Activated CD4-positive, alpha-beta T cell treated with anti-CD3 and anti-CD28 coated beads, Interleukin-2, amount 10 ng/mL, durations not matched to agents 24 days and 14 days (primary cell): ENCODE measurements at regions of chr11 and their contacts with region 1.

Region 1: GRCh38 chr11:11028017-11028692 is 170.3 kb upstream of the ZBED5 start:
- DNase-seq: peak; percentile 92
- H3K4me3 Mint-ChIP-seq: no peak overlapping the region
- H3K27ac Mint-ChIP-seq: no peak overlapping the region
- H3K4me1 Mint-ChIP-seq: peaks cover 2% of the 10 kb centered on the region
- H3K27me3 Mint-ChIP-seq: peaks cover 22% of the 10 kb centered on the region

Region 2: GRCh38 chr11:10893714-10894151 is 134.4 kb before region 1 on chr11:
- intact Hi-C with region 1: no loop called
- DNase-seq: no peak
- H3K4me3 Mint-ChIP-seq: no peak overlapping the region
- H3K27ac Mint-ChIP-seq: no peak overlapping the region
- H3K4me1 Mint-ChIP-seq: no peaks in the 10 kb centered on the region
- H3K27me3 Mint-ChIP-seq: peaks cover 20% of the 10 kb centered on the region

Region 3: GRCh38 chr11:10920205-10920604 is 108.0 kb before region 1 on chr11:
- intact Hi-C with region 1: no loop called
- DNase-seq: no peak
- H3K4me3 Mint-ChIP-seq: no peak overlapping the region
- H3K27ac Mint-ChIP-seq: no peak overlapping the region
- H3K4me1 Mint-ChIP-seq: no peaks in the 10 kb centered on the region
- H3K27me3 Mint-ChIP-seq: peaks cover 8% of the 10 kb centered on the region

Region 4: DNA sequence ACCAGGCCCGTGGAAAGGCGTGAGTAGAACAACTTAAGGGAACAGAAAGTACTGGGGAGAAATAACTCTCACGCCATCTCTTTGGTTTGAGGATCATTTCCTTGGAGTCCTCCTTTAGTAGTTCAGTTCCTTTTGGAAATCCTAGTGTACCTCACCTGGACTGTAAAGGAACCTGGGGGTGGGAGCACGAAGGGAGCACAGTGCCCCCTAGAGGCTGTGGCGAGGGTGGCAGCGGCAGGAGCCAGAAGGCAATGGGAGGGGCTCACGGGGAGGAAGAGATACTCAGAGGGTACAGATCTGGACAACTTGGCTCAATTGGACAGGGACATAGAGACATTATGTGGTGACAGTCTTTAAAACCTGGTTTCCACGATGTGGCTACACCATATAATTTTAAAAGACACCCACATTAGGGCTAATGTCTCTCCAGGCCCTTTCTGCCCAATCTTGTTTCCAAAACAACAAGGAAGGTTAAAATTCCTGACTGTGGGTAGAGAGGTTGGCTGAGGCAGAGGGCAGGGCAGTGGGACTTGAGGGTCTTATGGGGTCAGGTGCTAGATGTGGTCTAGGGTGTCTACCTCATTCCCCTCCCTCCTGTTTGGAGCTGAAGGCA is 237.9 kb after region 1 on chr11:
- intact Hi-C with region 1: loop called (anchors 1 kb)
- DNase-seq: peak; percentile 89
- H3K4me3 Mint-ChIP-seq: no peak overlapping the region
- H3K27ac Mint-ChIP-seq: no peak overlapping the region
- H3K4me1 Mint-ChIP-seq: no peaks in the 10 kb centered on the region
- H3K27me3 Mint-ChIP-seq: peaks cover 4% of the 10 kb centered on the region

Region 5: GRCh38 chr11:11291041-11292015 is 263.2 kb after region 1 on chr11:
- intact Hi-C with region 1: no loop called
- DNase-seq: no peak
- H3K4me3 Mint-ChIP-seq: no peak overlapping the region
- H3K27ac Mint-ChIP-seq: no peak overlapping the region
- H3K4me1 Mint-ChIP-seq: no peaks in the 10 kb centered on the region
- H3K27me3 Mint-ChIP-seq: no peaks in the 10 kb centered on the region